Endothelial cell of umbilical vein (primary cell): ENCODE measurements at regions of chr2 and their contacts with region 1.

Region 1: GRCh38 chr2:167292430-167293171 is 404.3 kb downstream of the XIRP2 start:
- DNase-seq: peak; percentile 87
- H3K4me3 ChIP-seq: peak within 1 kb of the TSS; percentile 50 to 82 (median 69)
- H3K27ac ChIP-seq: no peak within 1 kb of the TSS
- H3K4me1 ChIP-seq: peaks cover 19% of the 10 kb centered on the region
- H3K27me3 ChIP-seq: peaks cover 8 to 38% of the 10 kb centered on the region in 2 experiments
- CTCF ChIP-seq: peak in 1 of 2 donors; percentile 51
- POLR2A ChIP-seq: no peak

Region 2: GRCh38 chr2:167509586-167509985 is 217.0 kb after region 1 on chr2:
- CTCF ChIA-PET with region 1: no interaction called
- POLR2A ChIA-PET with region 1: no interaction called
- dilution Hi-C with region 1: no loop called
- intact Hi-C with region 1: loop called (anchors 1 kb)
- DNase-seq: peak; percentile 94
- H3K4me3 ChIP-seq: no peak overlapping the region
- H3K27ac ChIP-seq: peak overlapping the region; percentile 63
- H3K4me1 ChIP-seq: peaks cover 19% of the 10 kb centered on the region
- H3K27me3 ChIP-seq: no peaks in the 10 kb centered on the region
- CTCF ChIP-seq: no peak
- POLR2A ChIP-seq: no peak